A673 (cell line): ENCODE measurements at regions of chr20 and their contacts with region 1.

Region 1: DNA sequence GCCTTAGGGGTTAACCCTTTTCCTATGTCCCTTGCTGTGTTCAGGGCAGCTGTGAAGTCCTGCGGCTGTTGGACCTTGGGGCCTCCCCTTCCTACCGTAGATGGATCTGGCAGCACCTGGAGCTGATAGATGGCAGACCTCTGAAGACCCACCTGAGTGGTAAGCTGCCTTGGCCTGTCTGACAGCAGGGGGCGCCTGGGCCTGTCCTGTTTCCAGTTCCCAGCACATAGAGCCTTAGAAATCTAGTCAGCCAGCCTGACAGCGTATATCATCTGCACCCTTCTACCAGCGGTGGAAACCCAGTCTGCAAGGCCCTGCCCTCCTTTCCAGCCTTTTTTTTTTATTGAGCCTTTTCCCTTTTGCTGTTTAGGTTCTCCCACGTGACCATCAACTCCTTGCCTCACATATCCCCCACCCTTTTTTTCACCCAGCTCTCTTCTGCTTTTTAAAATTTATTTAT is 26.6 kb downstream of the CNBD2 start:
- DNase-seq: peak; percentile 76
- H3K4me3 ChIP-seq: no peak overlapping the region
- H3K27ac ChIP-seq: no peak overlapping the region
- H3K4me1 ChIP-seq: no peaks in the 10 kb centered on the region
- H3K27me3 ChIP-seq: no peaks in the 10 kb centered on the region
- CTCF ChIP-seq: peak; percentile 91

Region 2: GRCh38 chr20:36132802-36133211 is 137.8 kb after region 1 on chr20:
- CTCF ChIA-PET with region 1: interaction called, 15 read pairs
- POLR2A ChIA-PET with region 1: no interaction called
- intact Hi-C with region 1: loop called (anchors 1 kb)
- DNase-seq: peak; percentile 19
- H3K4me3 ChIP-seq: no peak overlapping the region
- H3K27ac ChIP-seq: no peak overlapping the region
- H3K4me1 ChIP-seq: no peaks in the 10 kb centered on the region
- H3K27me3 ChIP-seq: no peaks in the 10 kb centered on the region
- CTCF ChIP-seq: no peak

Region 3: DNA sequence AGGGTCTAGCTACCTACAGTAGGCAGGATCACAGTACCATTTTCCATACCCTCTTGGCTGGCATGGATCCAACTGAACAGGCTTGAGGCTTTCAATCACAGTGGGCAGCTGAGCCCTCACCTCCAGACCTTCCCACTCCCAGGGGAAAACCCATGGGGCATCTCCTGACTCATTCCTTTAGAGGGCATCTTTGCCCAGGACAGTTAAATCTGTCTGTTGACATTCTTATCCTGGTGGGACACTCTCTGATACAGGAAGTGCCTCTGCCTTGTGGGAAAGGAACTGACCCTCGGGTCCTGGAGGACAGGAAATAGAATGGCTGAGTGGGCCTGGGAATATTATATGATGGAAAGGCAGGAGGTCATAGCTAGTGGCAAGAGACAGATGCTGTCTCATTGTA is 149.3 kb after region 1 on chr20:
- CTCF ChIA-PET with region 1: interaction called, 92 read pairs
- POLR2A ChIA-PET with region 1: no interaction called
- intact Hi-C with region 1: no loop called
- DNase-seq: no peak
- H3K4me3 ChIP-seq: no peak overlapping the region
- H3K27ac ChIP-seq: no peak overlapping the region
- H3K4me1 ChIP-seq: no peaks in the 10 kb centered on the region
- H3K27me3 ChIP-seq: no peaks in the 10 kb centered on the region
- CTCF ChIP-seq: no peak

Region 4: DNA sequence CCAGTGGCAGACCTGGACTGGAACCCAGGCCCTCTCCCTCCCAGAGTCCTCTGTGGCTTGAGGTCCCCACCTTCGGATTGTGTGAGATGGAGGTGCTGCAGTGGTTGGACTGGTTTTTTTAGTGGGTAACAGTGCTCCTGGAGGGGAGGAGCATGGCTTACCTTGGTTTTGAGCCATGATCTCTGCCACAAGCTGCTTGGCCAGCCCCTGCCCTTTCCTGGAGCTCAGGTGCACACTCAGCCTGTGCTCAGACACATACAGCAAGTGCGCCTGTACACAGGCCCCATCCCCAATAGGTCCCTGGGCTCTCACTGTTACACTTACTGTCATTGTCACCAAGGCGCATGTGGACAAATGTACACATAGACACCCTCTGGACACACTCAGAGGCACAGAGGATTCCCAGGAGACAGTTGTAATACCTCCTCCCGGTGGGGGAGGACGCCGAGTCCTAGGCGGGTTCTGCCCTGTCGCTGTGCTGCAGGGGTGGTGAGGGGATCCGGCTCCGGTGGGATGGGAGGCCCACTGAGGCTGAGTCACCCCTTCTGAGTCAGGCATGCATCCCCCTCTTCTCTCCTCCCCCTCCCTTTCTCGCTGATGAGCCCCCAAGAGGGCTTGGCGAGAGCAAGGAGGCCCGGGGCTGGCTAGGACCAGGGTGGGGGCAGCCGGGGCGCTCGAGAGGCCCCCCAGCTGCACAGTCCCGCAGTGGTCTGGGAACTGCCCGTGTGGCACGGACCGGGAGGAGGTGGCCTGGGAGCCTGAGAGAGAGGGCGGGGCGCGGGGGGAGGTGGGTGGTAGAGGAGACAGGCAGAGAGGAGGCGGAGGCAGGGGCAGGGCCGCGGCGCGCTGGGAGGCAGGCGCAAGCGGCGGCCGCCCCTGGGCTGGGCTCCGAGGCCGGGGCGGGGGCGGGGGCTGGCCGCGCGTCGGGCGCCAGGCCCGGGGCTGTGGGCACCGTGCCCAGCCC is 159.0 kb after region 1 on chr20:
- CTCF ChIA-PET with region 1: interaction called, 6 read pairs
- POLR2A ChIA-PET with region 1: no interaction called
- intact Hi-C with region 1: loop called (anchors 5 kb)
- DNase-seq: peak; percentile 77
- H3K4me3 ChIP-seq: peak overlapping the region; percentile 60
- H3K27ac ChIP-seq: no peak overlapping the region
- H3K4me1 ChIP-seq: no peaks in the 10 kb centered on the region
- H3K27me3 ChIP-seq: no peaks in the 10 kb centered on the region
- CTCF ChIP-seq: no peak

Region 5: GRCh38 chr20:36199345-36200257 is 204.6 kb after region 1 on chr20:
- CTCF ChIA-PET with region 1: interaction called, 4 read pairs
- POLR2A ChIA-PET with region 1: no interaction called
- intact Hi-C with region 1: loop called (anchors 1 kb)
- DNase-seq: peak; percentile 80
- H3K4me3 ChIP-seq: no peak overlapping the region
- H3K27ac ChIP-seq: no peak overlapping the region
- H3K4me1 ChIP-seq: no peaks in the 10 kb centered on the region
- H3K27me3 ChIP-seq: no peaks in the 10 kb centered on the region
- CTCF ChIP-seq: peak; percentile 86

Region 6: DNA sequence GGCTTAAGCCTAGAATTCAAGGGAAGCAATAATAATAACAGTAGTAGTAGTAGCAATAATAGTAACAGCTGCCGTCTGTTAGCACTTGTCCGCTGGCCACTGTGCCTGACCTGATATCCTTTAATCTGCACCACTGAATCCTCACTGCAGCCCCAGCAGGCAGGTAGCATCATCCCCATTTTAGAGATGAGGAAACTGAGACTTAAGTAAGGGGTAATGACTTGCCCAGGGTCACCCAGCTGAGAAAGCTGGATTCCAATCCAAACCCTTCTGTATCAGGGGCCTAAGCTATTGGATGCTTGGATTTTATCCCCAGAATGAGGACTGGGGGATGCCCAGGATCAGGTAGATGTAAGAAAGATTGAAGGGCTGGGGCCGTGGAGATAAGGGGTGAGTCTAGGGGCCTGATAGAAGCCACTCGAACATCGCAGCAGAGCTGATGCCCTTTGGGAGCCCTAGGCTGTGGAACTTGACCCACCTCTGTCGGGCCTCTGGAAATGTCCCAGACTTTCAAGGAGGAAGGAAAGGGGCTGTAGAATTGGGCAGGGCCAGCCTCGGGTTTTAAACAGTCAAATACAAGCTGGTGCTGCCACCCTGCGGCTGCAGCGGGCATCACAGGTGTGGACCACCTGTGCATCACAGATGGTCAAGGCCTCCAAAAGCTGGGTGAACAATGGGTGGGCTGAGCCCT is 444.2 kb after region 1 on chr20:
- CTCF ChIA-PET with region 1: interaction called, 4 read pairs
- POLR2A ChIA-PET with region 1: no interaction called
- intact Hi-C with region 1: loop called (anchors 10 kb)
- DNase-seq: peak; percentile 71
- H3K4me3 ChIP-seq: no peak overlapping the region
- H3K27ac ChIP-seq: no peak overlapping the region
- H3K4me1 ChIP-seq: no peaks in the 10 kb centered on the region
- H3K27me3 ChIP-seq: no peaks in the 10 kb centered on the region
- CTCF ChIP-seq: peak; percentile 97

Region 7: GRCh38 chr20:36932476-36933426 is 937.7 kb after region 1 on chr20:
- CTCF ChIA-PET with region 1: interaction called, 11 read pairs
- POLR2A ChIA-PET with region 1: no interaction called
- intact Hi-C with region 1: no loop called
- DNase-seq: no peak
- H3K4me3 ChIP-seq: no peak overlapping the region
- H3K27ac ChIP-seq: no peak overlapping the region
- H3K4me1 ChIP-seq: no peaks in the 10 kb centered on the region
- H3K27me3 ChIP-seq: no peaks in the 10 kb centered on the region
- CTCF ChIP-seq: no peak